BJ (cell line): ENCODE measurements at regions of chr15 and their contacts with region 1.

Region 1: GRCh38 chr15:83132861-83133523 is 25.5 kb downstream of the TM6SF1 start:
- DNase-seq: no peak
- H3K4me3 ChIP-seq: no peak overlapping the region
- H3K27me3 ChIP-seq: no peaks in the 10 kb centered on the region
- CTCF ChIP-seq: no peak

Region 2: DNA sequence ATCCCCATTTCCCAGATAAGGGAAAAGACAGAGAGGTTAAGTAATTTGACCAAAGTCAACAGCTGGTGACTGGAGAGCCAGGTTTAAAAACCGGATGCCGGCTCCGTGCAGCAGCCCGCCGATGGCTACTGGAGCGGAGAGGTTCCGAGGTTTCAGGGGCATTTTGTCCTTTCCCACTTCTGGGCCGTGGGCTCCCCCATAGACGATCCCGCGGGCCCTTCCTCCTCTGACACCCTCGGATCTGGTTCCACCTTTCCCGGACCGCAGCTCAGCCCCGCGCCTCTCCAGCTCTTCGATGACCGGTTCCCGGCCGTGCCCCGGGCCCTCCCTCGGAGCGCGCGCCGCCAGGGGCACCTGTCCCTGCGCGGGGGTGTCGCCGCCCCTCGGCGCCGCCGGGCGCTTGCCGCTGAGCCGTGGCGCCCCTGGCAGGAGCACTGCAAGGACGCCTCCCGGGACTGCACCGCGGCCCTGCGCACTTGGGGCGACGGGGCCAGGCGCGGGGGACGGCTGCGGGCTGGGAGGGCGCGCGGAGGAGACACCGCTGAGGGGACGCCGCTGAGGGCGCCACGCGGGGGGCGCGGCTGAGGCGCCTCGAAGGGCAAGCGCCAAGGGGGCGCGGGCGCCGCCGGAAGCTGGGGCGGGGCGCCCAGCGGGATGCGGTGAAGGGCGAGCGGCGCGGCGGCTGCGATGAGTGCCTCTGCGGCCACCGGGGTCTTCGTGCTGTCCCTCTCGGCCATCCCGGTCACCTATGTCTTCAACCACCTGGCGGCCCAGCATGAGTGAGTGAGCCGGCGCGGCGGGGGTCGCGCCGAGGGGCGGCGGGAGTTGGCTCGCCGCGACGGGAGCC is 25.8 kb before region 1 on chr15 and contains the start of gene TM6SF1:
- CTCF ChIA-PET with region 1: no interaction called
- POLR2A ChIA-PET with region 1: interaction called, 11 read pairs
- DNase-seq: no peak
- H3K4me3 ChIP-seq: peak within 1 kb of the TSS; percentile 51
- H3K27me3 ChIP-seq: peaks cover 3% of the 10 kb centered on the region; the same call in 1 of the 2 replicates
- CTCF ChIP-seq: no peak
- polyA plus RNA-seq, gene TM6SF1: 3.2 and 3.8 TPM in 2 replicates

Region 3: DNA sequence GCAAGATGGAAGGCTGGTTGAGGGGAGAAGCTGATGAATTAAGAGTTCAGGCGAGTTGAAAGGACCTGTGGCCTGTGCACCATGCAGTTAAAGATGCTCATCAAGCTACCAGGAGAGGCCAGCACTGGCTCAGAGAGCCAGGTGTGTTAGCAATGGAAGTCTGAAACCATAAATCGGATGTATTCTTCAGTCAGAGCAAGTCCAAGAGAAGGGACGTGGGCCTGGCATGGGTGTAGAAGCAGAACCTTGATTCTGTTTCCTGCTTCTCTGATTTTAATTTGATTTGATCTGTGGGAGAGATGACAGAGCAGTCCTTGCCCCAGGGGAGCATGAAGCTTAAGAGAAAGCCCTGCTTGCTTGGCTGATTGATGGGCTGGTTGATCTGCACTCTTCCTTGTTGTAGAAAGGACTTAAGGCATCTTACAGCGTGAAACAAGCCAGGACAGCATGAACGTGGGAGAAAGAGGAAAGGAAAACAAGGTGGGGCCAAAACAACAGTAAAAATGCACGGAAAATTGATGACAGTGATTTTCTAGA is 14.6 kb before region 1 on chr15:
- CTCF ChIA-PET with region 1: no interaction called
- POLR2A ChIA-PET with region 1: no interaction called
- DNase-seq: no peak
- H3K4me3 ChIP-seq: no peak overlapping the region
- H3K27me3 ChIP-seq: no peaks in the 10 kb centered on the region
- CTCF ChIP-seq: no peak